MCF 10A (cell line): ENCODE measurements at regions of chr20 and their contacts with region 1.

Region 1: GRCh38 chr20:50987592-50988210 is 29.1 kb downstream of the MOCS3 start:
- DNase-seq: peak; percentile 90
- H3K4me3 Mint-ChIP-seq: no peak overlapping the region
- H3K27ac Mint-ChIP-seq: no peak overlapping the region
- H3K4me1 Mint-ChIP-seq: peaks cover 12% of the 10 kb centered on the region
- H3K27me3 Mint-ChIP-seq: no peaks in the 10 kb centered on the region
- CTCF ChIP-seq: peak; percentile 94

Region 2: GRCh38 chr20:49889935-49890333 is 1097.8 kb before region 1 on chr20:
- CTCF ChIA-PET with region 1: no interaction called
- POLR2A ChIA-PET with region 1: no interaction called
- intact Hi-C with region 1: no loop called
- DNase-seq: no peak
- H3K4me3 Mint-ChIP-seq: no peak overlapping the region
- H3K27ac Mint-ChIP-seq: no peak overlapping the region
- H3K4me1 Mint-ChIP-seq: peaks cover 7% of the 10 kb centered on the region
- H3K27me3 Mint-ChIP-seq: no peaks in the 10 kb centered on the region
- CTCF ChIP-seq: peak; percentile 24

Region 3: GRCh38 chr20:51001758-51002157 is 14.1 kb after region 1 on chr20:
- CTCF ChIA-PET with region 1: interaction called, 25 read pairs
- POLR2A ChIA-PET with region 1: interaction called, 3 read pairs
- intact Hi-C with region 1: no loop called
- DNase-seq: no peak
- H3K4me3 Mint-ChIP-seq: no peak overlapping the region
- H3K27ac Mint-ChIP-seq: no peak overlapping the region
- H3K4me1 Mint-ChIP-seq: peaks cover 6% of the 10 kb centered on the region
- H3K27me3 Mint-ChIP-seq: no peaks in the 10 kb centered on the region
- CTCF ChIP-seq: no peak

Region 4: GRCh38 chr20:51022803-51023630 is 35.3 kb after region 1 on chr20 and contains the start of gene KCNG1:
- CTCF ChIA-PET with region 1: interaction called, 15 read pairs
- POLR2A ChIA-PET with region 1: interaction called, 6 read pairs
- intact Hi-C with region 1: no loop called
- DNase-seq: peak; percentile 77
- H3K4me3 Mint-ChIP-seq: peak within 1 kb of the TSS; percentile 71
- H3K27ac Mint-ChIP-seq: no peak within 1 kb of the TSS
- H3K4me1 Mint-ChIP-seq: peaks cover 15% of the 10 kb centered on the region
- H3K27me3 Mint-ChIP-seq: peaks cover 4% of the 10 kb centered on the region
- CTCF ChIP-seq: no peak
- total RNA-seq, gene KCNG1: 24.8 and 30.6 TPM in 2 replicates

Region 5: DNA sequence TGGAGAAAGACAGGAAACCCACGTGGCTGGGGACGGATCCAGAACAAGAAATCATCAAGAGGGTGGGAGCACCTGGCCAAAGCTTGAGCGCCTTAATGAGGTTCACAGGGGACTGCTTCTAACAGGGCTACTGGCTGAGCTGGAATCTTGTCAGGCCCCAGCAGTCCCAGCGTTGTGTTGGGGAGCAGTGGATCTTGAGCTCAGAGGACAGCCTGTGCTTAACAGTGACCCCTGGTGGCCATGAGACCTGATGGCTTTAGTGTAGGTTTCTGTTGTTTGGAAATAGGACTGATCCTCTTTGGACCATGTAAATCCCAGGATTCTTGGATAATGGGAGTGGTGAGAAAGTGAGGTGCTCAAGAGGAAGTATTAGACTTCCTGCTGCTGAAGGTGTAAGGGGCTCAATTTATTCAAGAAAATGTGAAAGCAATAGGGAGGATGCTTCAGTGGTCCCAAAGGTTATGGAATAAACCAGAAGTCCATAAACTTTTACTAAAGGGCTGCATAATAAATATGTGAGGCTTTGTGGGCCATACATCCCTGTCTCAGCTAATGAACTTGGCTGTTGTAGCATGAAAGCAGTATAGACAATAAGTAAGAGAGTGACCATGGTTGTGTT is 338.6 kb after region 1 on chr20:
- CTCF ChIA-PET with region 1: interaction called, 362 read pairs
- POLR2A ChIA-PET with region 1: interaction called, 7 read pairs
- intact Hi-C with region 1: no loop called
- DNase-seq: peak; percentile 70
- H3K4me3 Mint-ChIP-seq: no peak overlapping the region
- H3K27ac Mint-ChIP-seq: peak overlapping the region; percentile 8
- H3K4me1 Mint-ChIP-seq: peaks cover 12% of the 10 kb centered on the region
- H3K27me3 Mint-ChIP-seq: no peaks in the 10 kb centered on the region
- CTCF ChIP-seq: peak; percentile 41

Region 6: GRCh38 chr20:51595058-51595532 is 607.4 kb after region 1 on chr20:
- CTCF ChIA-PET with region 1: interaction called, 113 read pairs
- POLR2A ChIA-PET with region 1: interaction called, 8 read pairs
- intact Hi-C with region 1: loop called (anchors 1 kb)
- DNase-seq: peak; percentile 86
- H3K4me3 Mint-ChIP-seq: no peak overlapping the region
- H3K27ac Mint-ChIP-seq: peak overlapping the region; percentile 61
- H3K4me1 Mint-ChIP-seq: peaks cover 6% of the 10 kb centered on the region
- H3K27me3 Mint-ChIP-seq: no peaks in the 10 kb centered on the region
- CTCF ChIP-seq: peak; percentile 92

Region 7: DNA sequence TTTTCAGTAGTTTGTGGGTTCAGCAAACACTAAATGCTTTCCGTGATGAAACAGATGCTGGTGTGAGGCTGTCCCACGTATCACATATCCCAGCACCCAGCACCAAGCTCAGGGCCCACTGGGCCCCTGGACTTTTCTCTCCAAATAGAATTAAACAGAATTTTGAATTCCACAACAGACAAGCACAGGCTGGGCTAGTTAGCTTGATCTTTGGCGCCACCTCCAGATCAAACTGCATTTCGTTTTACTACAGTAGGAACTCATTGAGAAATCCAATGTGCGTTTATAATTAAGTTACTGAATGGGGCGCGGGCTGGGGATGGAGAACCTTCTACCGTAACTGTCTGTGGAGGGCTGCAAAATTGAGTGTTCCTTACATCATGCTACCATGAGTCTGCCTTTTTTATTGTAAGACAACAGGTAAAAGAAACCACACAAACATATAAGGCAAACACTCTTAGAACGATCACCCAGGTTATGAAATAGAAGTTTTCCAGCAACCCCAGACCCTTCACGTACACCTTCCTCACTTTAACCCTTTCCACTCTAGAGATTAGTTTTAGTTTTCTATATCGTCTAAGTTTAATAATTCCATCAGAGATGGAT is 1096.0 kb after region 1 on chr20:
- CTCF ChIA-PET with region 1: interaction called, 7 read pairs
- POLR2A ChIA-PET with region 1: no interaction called
- intact Hi-C with region 1: loop called (anchors 2 kb)
- DNase-seq: peak; percentile 75
- H3K4me3 Mint-ChIP-seq: no peak overlapping the region
- H3K27ac Mint-ChIP-seq: no peak overlapping the region
- H3K4me1 Mint-ChIP-seq: peaks cover 11% of the 10 kb centered on the region
- H3K27me3 Mint-ChIP-seq: no peaks in the 10 kb centered on the region
- CTCF ChIP-seq: peak; percentile 84